Posterior vena cava (tissue), 2 donors: ENCODE measurements at regions of chr3 and their contacts with region 1.

Region 1: GRCh38 chr3:42880601-42881451 is 5.1 kb upstream of the CYP8B1 start:
- DNase-seq: peak; percentile 96

Region 2: GRCh38 chr3:42122651-42123581 is 757.9 kb before region 1 on chr3:
- intact Hi-C with region 1: no loop called
- DNase-seq: no peak

Region 3: DNA sequence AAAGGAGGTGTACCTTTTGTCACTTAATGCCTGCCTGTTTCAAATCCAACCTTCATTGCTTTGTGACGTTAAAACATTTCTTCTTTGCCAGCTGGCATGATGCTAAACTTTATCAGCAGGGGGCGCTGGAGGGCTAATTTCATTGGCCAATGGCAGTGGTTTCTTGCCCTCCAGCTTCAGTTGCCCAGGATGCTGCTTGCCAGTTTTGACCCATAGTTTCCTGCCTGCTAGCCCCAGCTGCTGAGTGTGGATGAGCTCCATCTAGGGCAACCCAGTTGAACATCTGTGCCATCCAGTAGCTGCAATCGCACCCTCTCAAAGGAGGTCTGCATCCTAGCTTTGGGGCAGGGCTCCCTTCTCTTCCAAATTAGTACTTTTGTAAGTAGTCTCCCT is 49.5 kb before region 1 on chr3:
- intact Hi-C with region 1: loop called (anchors 2 to 5 kb)
- DNase-seq: peak; percentile 91